CD4-positive, alpha-beta memory T cell (primary cell): ENCODE measurements at regions of chr17 and their contacts with region 1.

Region 1: DNA sequence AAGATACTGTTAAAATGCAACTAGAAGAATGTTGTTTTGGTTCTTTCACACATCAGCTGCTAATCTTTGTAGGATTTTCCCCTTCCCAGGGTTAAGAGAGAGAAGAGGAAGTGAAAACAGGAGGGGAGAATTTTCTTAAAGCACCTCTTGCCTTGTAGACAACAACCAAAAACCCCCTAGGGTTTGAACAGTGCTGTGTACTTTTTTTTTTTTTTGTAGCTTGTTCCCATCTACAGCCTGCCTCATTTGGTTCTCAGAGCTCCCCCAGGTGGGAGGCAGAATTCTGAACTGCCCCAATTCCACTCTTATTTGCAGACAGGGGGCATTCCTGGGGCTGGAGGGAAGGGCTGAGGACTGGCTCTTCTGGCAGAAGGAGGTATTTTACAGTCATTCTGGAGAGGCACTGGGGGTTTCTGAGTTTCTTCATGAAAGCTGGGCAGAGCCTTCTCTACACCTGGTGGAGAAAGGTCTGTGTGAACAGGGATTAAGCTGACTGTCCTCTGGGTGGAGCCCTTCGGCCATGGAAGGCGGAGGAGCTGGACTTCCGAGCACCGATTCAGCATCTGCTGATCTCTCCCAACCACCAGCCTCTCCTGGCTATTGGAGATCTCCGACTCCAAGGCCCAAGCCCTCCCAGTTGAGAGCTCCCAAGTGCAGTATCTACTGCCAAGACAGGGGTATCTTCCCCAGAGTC is 32.2 kb downstream of the SMARCE1 start:
- DNase-seq: peak in 4 of 5 donors; percentile 53 to 70 (median 56)
- H3K4me3 ChIP-seq: no peak overlapping the region
- H3K4me3 Mint-ChIP-seq: peak overlapping the region; percentile 41 to 83 (median 70)
- H3K27ac ChIP-seq: peak overlapping the region; percentile 66
- H3K27ac Mint-ChIP-seq: peak overlapping the region; percentile 86 to 97 (median 96)
- H3K4me1 ChIP-seq: peaks cover 76% of the 10 kb centered on the region
- H3K4me1 Mint-ChIP-seq: peaks cover 45 to 76% (median 66%) of the 10 kb centered on the region in 4 donors
- H3K27me3 ChIP-seq: no peaks in the 10 kb centered on the region
- H3K27me3 Mint-ChIP-seq: no peaks in the 10 kb centered on the region

Region 2: GRCh38 chr17:40551879-40552768 is 63.3 kb before region 1 on chr17:
- CTCF ChIA-PET with region 1: interaction called, 435 read pairs
- POLR2A ChIA-PET with region 1: interaction called, 1,226 read pairs
- intact Hi-C with region 1: no loop called
- DNase-seq: peak in 1 of 5 donors; percentile 25
- H3K4me3 ChIP-seq: no peak overlapping the region
- H3K4me3 Mint-ChIP-seq: peak overlapping the region in 5 of 8 donors; percentile 13 to 69 (median 27)
- H3K27ac ChIP-seq: no peak overlapping the region
- H3K27ac Mint-ChIP-seq: peak overlapping the region; percentile 60 to 96 (median 89)
- H3K4me1 ChIP-seq: peaks cover 99% of the 10 kb centered on the region
- H3K4me1 Mint-ChIP-seq: peaks cover 69 to 100% (median 86%) of the 10 kb centered on the region in 4 donors
- H3K27me3 ChIP-seq: no peaks in the 10 kb centered on the region
- H3K27me3 Mint-ChIP-seq: no peaks in the 10 kb centered on the region

Region 3: DNA sequence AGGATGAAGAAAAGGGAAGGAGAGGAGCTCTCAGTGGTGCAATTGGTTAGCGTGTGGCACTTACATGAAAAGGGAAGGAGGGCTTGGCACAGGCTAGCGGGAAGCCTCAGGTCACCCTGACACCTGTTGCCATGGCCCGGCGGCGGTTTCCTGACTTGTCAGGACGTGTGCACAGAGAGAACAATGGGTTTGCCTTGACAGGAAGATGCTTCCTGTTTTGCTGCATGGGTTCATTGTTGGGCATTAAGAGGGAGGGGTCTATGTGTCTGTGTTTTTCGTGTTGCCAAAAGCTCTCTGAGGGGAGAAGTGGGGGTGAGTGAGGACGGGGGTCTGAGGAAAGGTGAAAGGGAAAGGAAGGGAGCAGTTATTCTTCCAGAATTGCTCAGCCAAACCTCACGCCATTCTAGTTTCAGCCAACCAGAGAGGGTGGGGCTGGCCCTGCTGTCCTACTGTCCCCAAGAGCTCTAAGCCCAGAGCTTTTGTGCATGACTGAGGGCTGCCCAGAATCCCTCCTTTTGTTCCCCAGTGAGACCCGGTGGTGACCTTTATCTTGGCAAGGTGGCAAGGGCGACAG is 33.0 kb before region 1 on chr17:
- CTCF ChIA-PET with region 1: interaction called, 18 read pairs
- POLR2A ChIA-PET with region 1: interaction called, 38 read pairs
- intact Hi-C with region 1: no loop called
- DNase-seq: peak; percentile 74 to 78 (median 76)
- H3K4me3 ChIP-seq: peak overlapping the region; percentile 28 to 34
- H3K4me3 Mint-ChIP-seq: peak overlapping the region; percentile 32 to 84 (median 80)
- H3K27ac ChIP-seq: peak overlapping the region; percentile 47
- H3K27ac Mint-ChIP-seq: peak overlapping the region; percentile 75 to 96 (median 95)
- H3K4me1 ChIP-seq: peaks cover 72% of the 10 kb centered on the region
- H3K4me1 Mint-ChIP-seq: peaks cover 57 to 95% (median 78%) of the 10 kb centered on the region in 4 donors
- H3K27me3 ChIP-seq: no peaks in the 10 kb centered on the region
- H3K27me3 Mint-ChIP-seq: no peaks in the 10 kb centered on the region

Region 4: GRCh38 chr17:40598663-40599467 is 16.6 kb before region 1 on chr17:
- CTCF ChIA-PET with region 1: interaction called, 48 read pairs
- POLR2A ChIA-PET with region 1: interaction called, 187 read pairs
- intact Hi-C with region 1: loop called (anchors 2 kb)
- DNase-seq: peak; percentile 72 to 92 (median 77)
- H3K4me3 ChIP-seq: no peak overlapping the region
- H3K4me3 Mint-ChIP-seq: peak overlapping the region; percentile 67 to 89 (median 84)
- H3K27ac ChIP-seq: peak overlapping the region; percentile 92
- H3K27ac Mint-ChIP-seq: peak overlapping the region; percentile 94 to 100 (median 99)
- H3K4me1 ChIP-seq: peaks cover 88% of the 10 kb centered on the region
- H3K4me1 Mint-ChIP-seq: peaks cover 63 to 95% (median 78%) of the 10 kb centered on the region in 4 donors
- H3K27me3 ChIP-seq: no peaks in the 10 kb centered on the region
- H3K27me3 Mint-ChIP-seq: no peaks in the 10 kb centered on the region

Region 5: GRCh38 chr17:40726919-40727318 is 111.5 kb after region 1 on chr17:
- CTCF ChIA-PET with region 1: interaction called, 10 read pairs
- POLR2A ChIA-PET with region 1: no interaction called
- intact Hi-C with region 1: loop called (anchors 1 kb)
- DNase-seq: peak in 4 of 5 donors; percentile 11 to 27 (median 17)
- H3K4me3 ChIP-seq: no peak overlapping the region
- H3K4me3 Mint-ChIP-seq: no peak overlapping the region
- H3K27ac ChIP-seq: no peak overlapping the region
- H3K27ac Mint-ChIP-seq: no peak overlapping the region
- H3K4me1 ChIP-seq: no peaks in the 10 kb centered on the region
- H3K4me1 Mint-ChIP-seq: no peaks in the 10 kb centered on the region
- H3K27me3 ChIP-seq: peaks cover 10% of the 10 kb centered on the region
- H3K27me3 Mint-ChIP-seq: peaks cover 14 to 19% of the 10 kb centered on the region in 2 donors